AG04450 (cell line): ENCODE measurements at regions of chr6 and their contacts with region 1.

Region 1: DNA sequence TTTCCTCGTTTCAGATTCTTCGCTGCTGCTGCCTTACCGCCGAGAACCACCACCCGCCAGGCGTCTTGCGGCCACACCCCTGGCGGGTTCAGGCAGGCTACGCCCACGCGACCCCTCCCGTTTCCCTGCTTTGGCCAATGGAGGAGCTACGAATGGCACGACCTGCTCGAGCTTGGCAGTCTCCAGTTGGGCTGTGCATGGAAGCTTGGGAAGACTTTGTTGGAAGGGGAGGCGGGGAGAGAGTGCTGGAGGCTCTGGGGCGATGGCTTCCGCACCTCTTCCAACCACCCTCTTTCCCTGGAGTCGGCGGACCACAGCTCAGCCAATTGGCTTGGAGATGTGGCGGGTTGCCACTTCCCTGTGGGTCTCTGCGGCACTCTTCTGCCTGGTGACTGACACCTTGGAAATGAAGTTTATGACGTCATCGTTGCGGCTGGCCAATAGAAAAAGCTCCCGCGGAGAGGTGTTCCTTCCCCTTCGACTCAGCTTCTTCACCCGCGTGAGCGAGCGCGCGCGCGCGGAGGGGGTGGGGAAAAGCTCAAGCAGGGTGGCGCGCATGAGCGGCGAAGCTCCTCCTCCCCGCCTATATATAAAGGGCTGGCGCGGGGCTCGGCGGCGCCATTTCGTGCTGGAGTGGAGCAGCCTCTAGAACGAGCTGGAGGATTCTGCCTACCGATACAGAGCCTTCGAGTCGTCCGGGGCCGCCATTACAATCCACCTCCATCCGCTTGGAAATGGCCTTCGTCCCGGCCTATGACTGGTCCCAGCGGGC is 3.4 kb downstream of the BRD2 start:
- DNase-seq: peak; percentile 100
- H3K4me3 ChIP-seq: peak overlapping the region; percentile 99
- H3K27ac ChIP-seq: peak overlapping the region; percentile 100
- H3K27me3 ChIP-seq: no peaks in the 10 kb centered on the region
- CTCF ChIP-seq: 0 out of 2 replicates have a peak, but pooled peaks have one; percentile 14

Region 2: DNA sequence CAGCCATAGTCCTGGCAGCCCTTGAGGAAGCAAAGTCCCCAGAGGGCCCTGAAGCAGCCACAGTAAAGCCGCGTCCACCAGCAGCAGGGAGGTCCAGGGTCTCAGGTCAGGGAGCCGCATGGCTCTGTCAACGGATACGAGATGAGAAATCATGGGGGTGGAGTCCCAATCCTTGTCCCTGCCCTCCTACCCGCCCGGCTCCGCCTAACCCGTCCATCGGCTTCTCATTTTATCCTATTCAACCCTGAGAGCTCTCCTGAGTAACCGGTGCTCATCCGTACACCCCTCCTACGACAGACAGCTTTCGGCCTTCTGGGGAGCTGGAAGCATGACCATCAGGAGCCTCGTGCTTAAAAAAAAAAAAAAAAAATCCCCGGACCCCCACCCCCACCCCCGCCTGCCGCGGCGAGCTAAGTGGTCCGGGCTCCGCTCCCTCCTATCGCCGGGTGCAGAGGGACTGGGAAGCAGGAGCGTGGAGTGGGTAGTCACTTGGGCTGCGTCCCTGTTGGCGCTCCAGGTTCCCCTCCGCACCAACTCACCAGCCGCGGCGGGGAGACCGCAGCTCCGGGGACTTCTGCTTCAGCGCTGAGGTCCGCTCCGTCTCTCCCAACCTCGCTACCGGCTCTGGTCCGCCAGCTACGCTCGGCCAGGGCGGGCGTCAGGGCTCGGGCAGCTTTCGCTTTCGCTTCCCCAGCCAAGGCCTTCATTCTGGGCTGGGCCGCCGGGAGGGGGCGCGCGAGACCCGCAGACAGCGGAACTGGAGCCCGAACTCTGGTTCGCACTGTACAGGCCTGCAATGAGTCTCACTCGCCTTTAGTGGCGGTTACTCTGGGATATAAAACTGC is 133.4 kb before region 1 on chr6 and contains the start of gene TAP2:
- CTCF ChIA-PET with region 1: interaction called, 17 read pairs
- POLR2A ChIA-PET with region 1: interaction called, 25 read pairs
- DNase-seq: peak; percentile 74
- H3K4me3 ChIP-seq: peak within 1 kb of the TSS; percentile 92
- H3K27ac ChIP-seq: peak within 1 kb of the TSS; percentile 92
- H3K27me3 ChIP-seq: no peaks in the 10 kb centered on the region
- CTCF ChIP-seq: peak; percentile 96
- polyA plus RNA-seq, gene TAP2: 15.3 and 15.4 TPM in 2 replicates

Region 3: DNA sequence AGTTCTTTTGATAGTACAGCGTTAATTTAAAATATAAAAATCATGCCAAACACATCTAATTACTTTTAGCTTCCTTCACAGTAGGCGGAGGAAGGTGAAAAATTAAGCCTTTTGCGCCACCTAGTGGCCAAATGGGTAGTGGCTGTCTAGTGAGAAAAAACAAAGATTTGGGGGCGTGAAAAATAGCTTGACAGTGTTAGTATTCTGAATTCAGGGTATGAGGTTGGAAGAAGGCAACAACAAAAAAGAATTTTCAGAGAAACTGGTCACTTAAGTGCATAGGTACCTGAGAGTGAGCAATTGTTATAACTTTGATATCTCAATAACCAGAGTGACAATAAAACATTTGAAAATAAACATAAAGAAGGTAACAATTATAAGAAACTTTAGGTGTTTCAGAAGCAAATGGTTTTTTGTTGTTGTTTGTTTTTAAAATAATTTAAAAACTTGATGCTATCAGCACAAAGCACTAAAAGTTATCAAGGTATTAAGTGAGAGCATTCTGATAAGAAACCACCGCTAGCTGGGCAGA is 103.4 kb before region 1 on chr6:
- CTCF ChIA-PET with region 1: interaction called, 11 read pairs
- POLR2A ChIA-PET with region 1: interaction called, 8 read pairs
- DNase-seq: no peak
- H3K4me3 ChIP-seq: no peak overlapping the region
- H3K27ac ChIP-seq: no peak overlapping the region
- H3K27me3 ChIP-seq: peaks cover 20% of the 10 kb centered on the region
- CTCF ChIP-seq: peak; percentile 89

Region 4: GRCh38 chr6:32933636-32934085 is 38.1 kb before region 1 on chr6:
- CTCF ChIA-PET with region 1: interaction called, 56 read pairs
- POLR2A ChIA-PET with region 1: interaction called, 48 read pairs
- DNase-seq: peak; percentile 56
- H3K4me3 ChIP-seq: no peak overlapping the region
- H3K27ac ChIP-seq: no peak overlapping the region
- H3K27me3 ChIP-seq: peaks cover 25% of the 10 kb centered on the region
- CTCF ChIP-seq: peak; percentile 82

Region 5: GRCh38 chr6:32952817-32953739 is 18.7 kb before region 1 on chr6 and contains the start of gene HLA-DMA:
- CTCF ChIA-PET with region 1: interaction called, 72 read pairs
- POLR2A ChIA-PET with region 1: interaction called, 85 read pairs
- DNase-seq: peak; percentile 80
- H3K4me3 ChIP-seq: peak within 1 kb of the TSS; percentile 29
- H3K27ac ChIP-seq: no peak within 1 kb of the TSS
- H3K27me3 ChIP-seq: no peaks in the 10 kb centered on the region
- CTCF ChIP-seq: peak; percentile 82
- polyA plus RNA-seq, gene HLA-DMA: 7.1 and 8.2 TPM in 2 replicates

Region 6: DNA sequence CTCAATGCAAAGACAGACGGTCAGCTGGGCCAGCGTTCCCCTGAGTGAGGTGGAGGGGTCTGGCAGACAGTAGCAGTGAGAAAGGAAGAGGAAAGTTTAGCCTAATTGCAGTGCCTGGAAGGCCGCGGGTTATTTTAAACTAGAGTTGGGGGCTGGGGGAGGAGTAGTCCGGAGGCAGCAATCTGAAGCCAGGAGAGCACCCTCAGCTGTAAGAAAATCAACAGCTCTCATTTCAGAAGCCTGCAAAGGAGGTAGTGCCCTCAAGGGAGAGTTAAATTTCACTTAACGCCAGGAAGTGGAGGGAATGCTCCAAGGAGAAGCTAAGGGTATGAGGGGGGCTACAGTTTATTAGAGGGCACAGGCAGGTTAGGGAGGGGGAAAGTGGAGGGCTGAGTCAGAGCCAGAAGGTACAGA is 263.5 kb after region 1 on chr6:
- CTCF ChIA-PET with region 1: no interaction called
- POLR2A ChIA-PET with region 1: no interaction called
- DNase-seq: no peak
- H3K4me3 ChIP-seq: no peak overlapping the region
- H3K27ac ChIP-seq: no peak overlapping the region
- H3K27me3 ChIP-seq: peaks cover 33% of the 10 kb centered on the region
- CTCF ChIP-seq: no peak

Region 7: GRCh38 chr6:33248925-33249731 is 277.4 kb after region 1 on chr6:
- CTCF ChIA-PET with region 1: interaction called, 7 read pairs
- POLR2A ChIA-PET with region 1: interaction called, 51 read pairs
- DNase-seq: peak; percentile 98
- H3K4me3 ChIP-seq: peak overlapping the region; percentile 80
- H3K27ac ChIP-seq: peak overlapping the region; percentile 97
- H3K27me3 ChIP-seq: no peaks in the 10 kb centered on the region
- CTCF ChIP-seq: peak; percentile 26; the same call in 1 of the 2 replicates